WTC11 (cell line): ENCODE measurements at regions of chr19 and their contacts with region 1.

Region 1: GRCh38 chr19:18281082-18282020 is at the start of gene JUND:
- DNase-seq: peak; percentile 94
- ATAC-seq: peak; percentile 63
- H3K4me3 Mint-ChIP-seq: peak within 1 kb of the TSS; percentile 96
- H3K27ac Mint-ChIP-seq: peak within 1 kb of the TSS; percentile 98
- H3K4me1 Mint-ChIP-seq: peaks cover 31% of the 10 kb centered on the region
- H3K27me3 Mint-ChIP-seq: peaks cover 4% of the 10 kb centered on the region
- CTCF ChIP-seq: no peak
- total RNA-seq, gene JUND: 121 to 137 TPM (median 133 TPM) in 3 replicates

Region 2: DNA sequence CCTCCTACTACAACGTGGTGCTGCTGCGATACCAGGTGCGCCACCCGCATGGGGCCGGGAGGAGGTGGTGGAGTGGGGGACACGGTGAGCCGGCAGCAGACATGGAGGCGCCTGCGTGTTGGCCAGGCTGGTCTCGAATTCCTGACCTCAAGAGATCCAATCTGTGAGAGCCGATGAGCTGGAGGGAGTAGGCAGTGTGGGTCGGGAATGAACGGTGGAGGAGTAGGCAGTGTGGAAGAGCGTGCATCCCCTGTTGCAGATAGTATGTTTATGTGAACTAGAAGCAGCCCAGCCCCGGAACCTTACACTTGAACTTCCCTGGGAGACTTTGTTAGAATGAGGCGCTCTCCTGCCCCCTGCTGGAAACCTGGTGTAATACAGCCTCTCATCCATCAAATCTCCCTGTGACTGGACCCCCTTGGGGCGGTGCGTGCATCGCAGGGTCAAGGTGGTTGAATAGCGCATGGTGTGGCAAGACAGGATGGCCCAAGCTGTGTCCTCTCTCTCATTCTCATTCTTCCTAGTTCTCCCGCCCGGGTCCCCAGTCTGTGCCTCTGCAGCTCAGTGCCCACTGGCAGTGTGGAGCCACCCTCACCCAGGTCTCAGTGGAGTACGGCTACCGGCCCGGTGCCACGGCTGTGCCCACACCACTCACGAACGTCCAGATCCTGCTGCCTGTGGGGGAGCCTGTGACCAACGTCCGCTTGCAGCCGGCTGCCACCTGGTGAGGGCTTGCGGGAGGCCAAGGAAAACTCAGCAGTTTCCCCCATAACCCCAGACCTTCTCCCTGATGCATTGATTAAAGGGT is 496.9 kb before region 1 on chr19:
- CTCF ChIA-PET with region 1: no interaction called
- POLR2A ChIA-PET with region 1: no interaction called
- DNase-seq: peak; percentile 89
- ATAC-seq: peak; percentile 49
- H3K4me3 Mint-ChIP-seq: no peak overlapping the region
- H3K27ac Mint-ChIP-seq: peak overlapping the region; percentile 54
- H3K4me1 Mint-ChIP-seq: peaks cover 9% of the 10 kb centered on the region
- H3K27me3 Mint-ChIP-seq: no peaks in the 10 kb centered on the region
- CTCF ChIP-seq: peak; percentile 97

Region 3: DNA sequence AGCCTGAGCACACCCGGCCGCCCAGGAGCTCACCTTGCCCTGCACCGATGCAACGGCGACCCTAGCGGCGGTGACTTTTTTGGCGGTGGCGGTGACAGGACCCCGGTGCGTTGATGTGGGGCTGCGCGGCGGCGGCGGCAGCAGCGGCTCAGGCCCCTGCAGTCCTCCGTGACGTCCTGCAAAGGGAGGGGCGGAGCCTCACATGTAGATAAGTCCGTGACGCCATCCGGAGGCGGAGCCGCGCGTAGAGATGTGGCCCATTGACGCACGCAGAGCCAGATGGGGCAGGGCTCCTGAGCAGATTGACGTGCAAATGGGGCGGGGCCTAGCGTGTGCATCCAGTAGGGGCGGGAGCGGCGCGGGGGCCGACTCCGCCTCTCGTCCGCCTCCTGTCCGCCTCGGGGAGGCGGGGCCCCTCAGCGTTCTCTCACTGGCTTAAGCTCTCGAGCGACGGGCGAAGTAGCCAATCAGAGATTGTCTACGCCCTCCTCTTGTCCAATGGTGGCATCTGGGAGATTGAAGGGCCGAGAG is 77.4 kb before region 1 on chr19 and contains the start of gene RAB3A:
- CTCF ChIA-PET with region 1: interaction called, 57 read pairs
- POLR2A ChIA-PET with region 1: interaction called, 34 read pairs
- DNase-seq: peak; percentile 100
- ATAC-seq: peak; percentile 91
- H3K4me3 Mint-ChIP-seq: peak within 1 kb of the TSS; percentile 95
- H3K27ac Mint-ChIP-seq: peak within 1 kb of the TSS; percentile 99
- H3K4me1 Mint-ChIP-seq: peaks cover 22% of the 10 kb centered on the region
- H3K27me3 Mint-ChIP-seq: no peaks in the 10 kb centered on the region
- CTCF ChIP-seq: no peak
- total RNA-seq, gene RAB3A: 12.2 to 14.7 TPM (median 14.6 TPM) in 3 replicates

Region 4: DNA sequence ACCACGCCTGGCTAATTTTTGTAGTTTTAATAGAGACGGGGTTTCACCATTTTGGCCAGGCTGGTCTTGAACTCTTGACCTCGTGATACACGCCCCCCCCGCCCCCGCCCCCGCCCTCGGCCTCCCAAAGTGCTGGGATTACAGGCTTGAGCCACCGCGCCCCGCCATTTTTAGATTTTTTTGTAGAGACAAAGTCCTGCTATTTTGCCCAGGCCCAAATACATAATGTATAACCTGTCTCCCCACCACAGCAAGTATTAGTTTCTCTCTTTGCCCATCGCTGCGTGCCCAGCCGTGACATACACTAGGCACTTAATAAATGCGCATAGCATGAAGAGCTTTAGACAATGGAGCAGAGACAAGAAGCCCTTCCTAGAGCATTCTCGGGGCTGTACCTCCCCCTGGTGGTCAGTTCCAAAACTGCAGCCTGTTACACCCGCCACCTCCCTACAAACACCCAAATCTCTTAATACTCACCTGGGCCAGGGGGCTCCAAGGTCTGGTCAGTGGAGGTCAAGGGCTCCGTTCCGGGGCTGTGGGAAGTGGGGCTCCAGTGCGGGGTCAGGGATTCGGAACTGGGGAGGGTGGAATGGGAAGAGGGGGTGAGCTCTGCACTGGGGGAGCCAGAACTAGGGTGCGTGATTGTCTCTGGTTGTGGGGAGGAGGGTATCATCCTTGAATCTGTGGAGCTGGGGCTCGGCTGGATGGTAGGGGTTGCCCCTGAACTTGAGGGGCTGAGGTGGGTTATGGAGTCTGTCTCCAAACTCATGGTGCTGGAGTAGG is 29.6 kb before region 1 on chr19:
- CTCF ChIA-PET with region 1: interaction called, 41 read pairs
- POLR2A ChIA-PET with region 1: interaction called, 27 read pairs
- DNase-seq: peak; percentile 93
- ATAC-seq: peak; percentile 83
- H3K4me3 Mint-ChIP-seq: no peak overlapping the region
- H3K27ac Mint-ChIP-seq: peak overlapping the region; percentile 35; the same call in 1 of the 2 replicates
- H3K4me1 Mint-ChIP-seq: peaks cover 22% of the 10 kb centered on the region
- H3K27me3 Mint-ChIP-seq: peaks cover 13% of the 10 kb centered on the region
- CTCF ChIP-seq: peak; percentile 99

Region 5: GRCh38 chr19:18304458-18305310 is 23.3 kb after region 1 on chr19:
- CTCF ChIA-PET with region 1: interaction called, 82 read pairs
- POLR2A ChIA-PET with region 1: interaction called, 29 read pairs
- DNase-seq: peak; percentile 45
- ATAC-seq: peak; percentile 46
- H3K4me3 Mint-ChIP-seq: peak overlapping the region; percentile 59
- H3K27ac Mint-ChIP-seq: peak overlapping the region; percentile 67
- H3K4me1 Mint-ChIP-seq: peaks cover 39% of the 10 kb centered on the region
- H3K27me3 Mint-ChIP-seq: no peaks in the 10 kb centered on the region
- CTCF ChIP-seq: no peak

Region 6: GRCh38 chr19:18333662-18334389 is 52.5 kb after region 1 on chr19:
- CTCF ChIA-PET with region 1: interaction called, 190 read pairs
- POLR2A ChIA-PET with region 1: interaction called, 51 read pairs
- DNase-seq: no peak
- ATAC-seq: no peak
- H3K4me3 Mint-ChIP-seq: no peak overlapping the region
- H3K27ac Mint-ChIP-seq: no peak overlapping the region
- H3K4me1 Mint-ChIP-seq: peaks cover 23% of the 10 kb centered on the region
- H3K27me3 Mint-ChIP-seq: no peaks in the 10 kb centered on the region
- CTCF ChIP-seq: no peak

Region 7: DNA sequence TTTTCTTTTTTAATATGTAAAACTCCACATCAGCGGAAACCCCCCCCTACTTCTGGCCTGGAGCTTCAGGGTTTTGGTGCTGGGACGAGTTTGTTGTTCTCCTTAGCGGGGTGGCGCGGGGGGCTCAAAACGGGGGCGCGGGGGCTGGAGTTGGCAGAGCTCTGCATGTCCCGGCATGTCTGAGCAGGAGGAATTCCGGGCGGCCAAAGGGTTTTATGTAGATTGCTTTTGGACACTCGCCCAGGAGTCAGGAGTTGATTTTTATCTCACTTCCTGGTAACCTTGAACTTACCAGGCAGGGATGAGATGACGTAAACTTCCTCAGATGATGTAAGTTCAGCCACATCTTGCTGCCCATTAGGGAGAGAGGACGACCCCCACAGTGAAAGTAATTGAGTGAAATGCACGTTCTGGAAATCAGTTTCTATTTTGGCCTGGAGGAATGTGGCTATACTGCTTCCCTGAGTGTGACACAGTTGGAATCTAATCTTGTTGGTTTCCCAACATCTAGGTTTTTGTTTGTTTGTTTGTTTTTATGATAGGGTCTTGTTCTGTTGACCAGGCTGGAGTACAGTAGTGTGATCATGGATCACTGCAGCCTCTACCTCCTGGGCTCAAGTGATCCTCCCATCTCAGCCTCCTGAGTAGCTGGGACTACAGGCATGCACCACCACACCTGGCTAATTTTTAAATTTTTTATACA is 83.6 kb after region 1 on chr19:
- CTCF ChIA-PET with region 1: interaction called, 11 read pairs
- POLR2A ChIA-PET with region 1: interaction called, 6 read pairs
- DNase-seq: peak; percentile 38
- ATAC-seq: no peak
- H3K4me3 Mint-ChIP-seq: no peak overlapping the region
- H3K27ac Mint-ChIP-seq: peak overlapping the region; percentile 97
- H3K4me1 Mint-ChIP-seq: peaks cover 45% of the 10 kb centered on the region
- H3K27me3 Mint-ChIP-seq: no peaks in the 10 kb centered on the region
- CTCF ChIP-seq: no peak

Region 8: DNA sequence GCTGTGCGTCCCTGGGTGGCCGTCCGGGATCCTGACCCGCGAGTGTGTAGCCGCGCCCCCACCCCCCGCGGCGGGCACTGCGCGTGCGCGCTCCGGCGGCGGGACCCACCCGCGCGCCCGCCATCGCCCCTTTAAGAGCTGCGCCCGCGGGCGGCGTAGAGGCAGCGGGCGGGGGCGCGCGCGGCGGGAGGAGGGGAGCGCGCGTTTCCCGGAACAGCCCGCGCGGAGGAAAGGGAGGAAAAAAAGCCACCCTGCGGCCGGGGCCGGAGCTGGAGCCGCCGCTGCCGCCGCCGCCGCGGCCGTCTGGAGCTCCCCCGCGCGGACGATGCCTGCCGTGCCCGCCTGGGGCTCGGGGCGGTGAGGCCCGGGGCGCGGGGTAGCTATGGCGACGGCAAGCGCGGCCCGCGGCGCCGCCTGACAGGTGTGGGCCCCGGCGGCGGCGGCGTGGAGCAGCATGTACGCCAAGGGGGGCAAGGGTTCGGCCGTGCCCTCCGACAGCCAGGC is 137.9 kb after region 1 on chr19 and contains the start of gene SSBP4:
- CTCF ChIA-PET with region 1: interaction called, 56 read pairs
- POLR2A ChIA-PET with region 1: interaction called, 13 read pairs
- DNase-seq: peak; percentile 69
- ATAC-seq: peak; percentile 5; the same call in 1 of the 2 replicates
- H3K4me3 Mint-ChIP-seq: peak within 1 kb of the TSS; percentile 72
- H3K27ac Mint-ChIP-seq: no peak within 1 kb of the TSS
- H3K4me1 Mint-ChIP-seq: peaks cover 30% of the 10 kb centered on the region
- H3K27me3 Mint-ChIP-seq: peaks cover 32% of the 10 kb centered on the region
- CTCF ChIP-seq: no peak
- total RNA-seq, gene SSBP4: 44.5 to 51.2 TPM (median 47.4 TPM) in 3 replicates

Region 9: DNA sequence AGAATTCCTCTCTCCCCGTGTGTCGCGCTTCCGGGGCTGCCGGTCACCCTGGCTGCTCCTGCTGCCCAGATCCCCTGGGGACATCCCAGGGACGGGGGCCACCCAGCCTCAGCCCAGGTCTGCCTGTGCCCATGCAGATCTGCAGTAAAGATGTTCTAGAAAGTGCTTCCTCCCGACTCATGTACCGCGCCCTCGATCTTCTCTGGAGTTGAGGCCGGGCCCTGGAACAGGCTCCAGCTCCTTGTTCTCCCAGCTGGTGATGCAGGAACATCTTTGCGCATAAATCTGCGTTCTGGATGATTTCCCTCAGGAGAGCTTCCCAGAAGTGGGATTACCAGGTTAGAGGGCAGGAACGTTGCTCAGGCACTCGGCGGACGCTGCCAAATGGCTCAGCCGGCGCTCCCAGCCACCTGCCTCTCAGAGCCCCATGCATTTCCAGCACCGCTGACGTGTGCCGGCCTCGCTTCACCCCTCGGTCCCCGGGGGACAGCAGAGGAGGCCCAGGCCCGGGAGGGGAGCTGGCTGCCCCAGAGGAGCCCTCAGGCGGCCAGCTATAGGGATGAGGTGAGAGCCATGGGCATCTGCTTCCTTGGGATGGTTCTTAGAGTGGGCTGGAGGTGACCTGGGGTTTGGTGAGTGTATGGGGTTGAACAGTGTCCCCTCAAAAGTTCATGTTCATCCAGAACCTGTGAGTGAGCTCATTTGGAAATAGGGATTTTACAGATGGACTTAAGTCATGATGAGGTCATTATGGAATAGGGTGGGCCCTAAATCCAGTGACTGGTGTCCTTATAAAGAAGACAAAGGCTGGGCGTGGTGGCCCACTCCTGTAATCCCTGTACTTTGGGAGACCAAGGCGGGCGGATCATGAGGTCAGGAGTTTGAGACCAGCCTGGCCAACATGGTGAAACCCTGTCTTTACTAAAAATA is 444.8 kb after region 1 on chr19:
- CTCF ChIA-PET with region 1: no interaction called
- POLR2A ChIA-PET with region 1: no interaction called
- DNase-seq: no peak
- ATAC-seq: no peak
- H3K4me3 Mint-ChIP-seq: no peak overlapping the region
- H3K27ac Mint-ChIP-seq: 0 out of 2 replicates have a peak overlapping the region, but pooled peaks have one; percentile 20
- H3K4me1 Mint-ChIP-seq: peaks cover 5% of the 10 kb centered on the region; the same call in 1 of the 2 replicates
- H3K27me3 Mint-ChIP-seq: 0 out of 2 replicates have a peak, but pooled peaks cover 3% of the 10 kb centered on the region
- CTCF ChIP-seq: no peak